ENCODE measurements at regions of chr16 and their contacts with region 1.

Region 1: GRCh38 chr16:13587176-13587575 is 332.8 kb upstream of the ERCC4 start:
- DNase-seq: no peak
- H3K4me3 ChIP-seq: no peak overlapping the region
- H3K27ac ChIP-seq: no peak overlapping the region
- H3K4me1 ChIP-seq: no peaks in the 10 kb centered on the region
- H3K27me3 ChIP-seq: no peaks in the 10 kb centered on the region
- CTCF ChIP-seq: no peak

Region 2: DNA sequence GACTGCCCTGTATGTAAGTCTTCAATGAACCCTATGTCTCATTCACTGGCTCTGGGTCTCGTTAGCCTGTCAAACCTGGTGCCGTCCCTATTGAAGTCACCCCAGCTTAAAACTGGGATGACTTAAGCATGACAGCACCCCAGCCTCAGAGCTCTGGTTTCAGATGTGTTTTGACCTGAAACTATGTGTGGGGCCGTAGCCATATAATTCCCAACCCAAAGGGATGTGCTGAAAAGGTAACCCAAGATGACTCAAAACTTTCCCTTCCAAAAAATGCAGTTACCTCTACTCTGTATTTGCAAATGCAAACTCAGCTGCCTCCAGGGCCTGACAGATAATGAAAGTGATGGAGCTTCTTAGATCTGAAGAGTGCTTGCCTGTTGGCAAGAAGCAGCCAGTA is 145.5 kb before region 1 on chr16:
- CTCF ChIA-PET with region 1: no interaction called
- dilution Hi-C with region 1: no loop called
- in situ Hi-C with region 1: no loop called
- intact Hi-C with region 1: no loop called
- DNase-seq: no peak
- H3K4me3 ChIP-seq: no peak overlapping the region
- H3K27ac ChIP-seq: no peak overlapping the region
- H3K4me1 ChIP-seq: peaks cover 2% of the 10 kb centered on the region
- H3K27me3 ChIP-seq: no peaks in the 10 kb centered on the region
- CTCF ChIP-seq: no peak

Region 3: DNA sequence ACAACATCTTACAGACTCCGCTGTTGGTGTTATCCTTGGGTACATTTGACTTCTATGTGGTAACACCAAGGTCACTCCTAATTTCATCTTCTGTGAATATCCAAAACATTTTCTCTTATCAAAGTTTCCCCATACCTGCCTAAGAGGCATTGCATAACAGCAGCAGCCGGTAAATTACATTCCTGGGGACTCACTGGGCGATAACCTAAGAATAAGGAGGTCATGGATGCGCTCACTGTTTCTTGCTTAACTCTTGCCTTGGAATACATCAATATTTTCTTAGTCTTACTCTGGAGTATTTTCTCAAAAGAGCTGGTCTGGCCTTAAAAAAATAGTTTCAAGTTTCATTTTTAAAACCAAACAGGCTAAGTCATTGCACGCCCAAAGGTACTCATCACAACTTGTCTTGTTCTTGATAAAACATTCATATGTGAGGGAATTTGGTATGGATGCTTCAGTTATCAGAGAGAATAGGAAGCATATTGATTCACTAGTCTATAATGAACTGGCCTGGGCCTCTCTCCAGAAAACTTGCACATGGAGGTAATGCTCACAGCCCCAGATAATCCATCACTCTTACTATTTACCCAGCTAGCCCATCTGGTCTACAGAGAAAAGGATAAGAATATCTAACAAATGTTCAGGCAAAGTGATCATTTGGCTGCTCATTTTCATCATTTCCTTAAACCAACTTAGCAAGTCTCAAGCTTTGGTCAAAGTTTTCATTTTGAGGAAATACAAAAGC is 97.8 kb after region 1 on chr16:
- CTCF ChIA-PET with region 1: no interaction called
- dilution Hi-C with region 1: loop called (anchors 5 kb)
- in situ Hi-C with region 1: no loop called
- intact Hi-C with region 1: no loop called
- DNase-seq: no peak
- H3K4me3 ChIP-seq: no peak overlapping the region
- H3K27ac ChIP-seq: no peak overlapping the region
- H3K4me1 ChIP-seq: no peaks in the 10 kb centered on the region
- H3K27me3 ChIP-seq: no peaks in the 10 kb centered on the region
- CTCF ChIP-seq: no peak

Region 4: GRCh38 chr16:13829697-13830299 is 242.6 kb after region 1 on chr16:
- CTCF ChIA-PET with region 1: no interaction called
- dilution Hi-C with region 1: loop called (anchors 10 kb)
- in situ Hi-C with region 1: no loop called
- intact Hi-C with region 1: no loop called
- DNase-seq: no peak
- H3K4me3 ChIP-seq: no peak overlapping the region
- H3K27ac ChIP-seq: no peak overlapping the region
- H3K4me1 ChIP-seq: no peaks in the 10 kb centered on the region
- H3K27me3 ChIP-seq: no peaks in the 10 kb centered on the region
- CTCF ChIP-seq: no peak